ENCODE measurements at regions of chr6 and their contacts with region 1.

Region 1: DNA sequence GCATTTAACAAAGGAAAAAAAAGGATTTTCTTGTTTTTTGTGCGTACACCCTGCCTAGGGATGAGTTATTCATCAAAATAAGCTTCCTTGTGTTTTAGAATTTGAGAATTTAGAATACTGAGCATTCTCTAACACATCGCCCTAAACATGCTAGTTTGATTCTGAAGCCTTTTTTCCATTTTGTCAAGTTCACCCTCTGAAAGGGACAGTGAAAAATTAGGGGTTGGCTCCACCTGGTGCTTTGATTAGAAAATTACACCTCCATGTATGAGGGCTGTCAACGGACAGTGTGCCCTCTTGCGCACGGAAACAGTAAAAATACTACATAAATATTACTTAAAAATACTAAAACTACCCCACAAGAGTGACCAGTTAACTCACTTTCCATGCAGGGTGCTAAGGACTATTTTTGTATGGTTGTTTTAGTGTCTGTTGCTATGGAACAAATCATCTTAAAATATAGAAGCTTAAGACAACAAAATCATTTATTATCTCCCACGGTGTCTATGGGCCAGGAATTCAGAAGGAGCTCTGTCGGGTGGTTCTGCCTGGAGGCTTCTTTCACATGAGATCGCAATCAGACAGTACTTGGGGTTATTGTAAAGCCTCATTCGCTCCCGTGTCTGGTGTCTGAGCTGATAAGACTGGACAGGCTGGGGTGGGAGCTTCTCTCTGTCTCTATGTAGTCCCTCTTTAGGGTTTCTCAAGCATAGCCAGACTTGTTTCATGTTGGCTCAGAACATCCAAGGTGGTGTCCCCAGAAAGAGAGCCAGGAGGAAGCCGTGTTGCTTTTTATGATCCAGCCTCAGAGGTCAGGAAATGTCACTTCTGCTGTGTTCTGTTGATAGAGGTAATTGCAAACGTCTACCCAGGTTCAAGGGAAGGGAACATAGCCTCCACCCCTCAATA is 41.1 kb upstream of the TMEM170B start:
- DNase-seq: peak; percentile 69

Region 2: GRCh38 chr6:11241793-11242201 is 254.6 kb before region 1 on chr6:
- CTCF ChIA-PET with region 1: interaction called, 11 read pairs
- POLR2A ChIA-PET with region 1: no interaction called
- DNase-seq: peak; percentile 19

Region 3: DNA sequence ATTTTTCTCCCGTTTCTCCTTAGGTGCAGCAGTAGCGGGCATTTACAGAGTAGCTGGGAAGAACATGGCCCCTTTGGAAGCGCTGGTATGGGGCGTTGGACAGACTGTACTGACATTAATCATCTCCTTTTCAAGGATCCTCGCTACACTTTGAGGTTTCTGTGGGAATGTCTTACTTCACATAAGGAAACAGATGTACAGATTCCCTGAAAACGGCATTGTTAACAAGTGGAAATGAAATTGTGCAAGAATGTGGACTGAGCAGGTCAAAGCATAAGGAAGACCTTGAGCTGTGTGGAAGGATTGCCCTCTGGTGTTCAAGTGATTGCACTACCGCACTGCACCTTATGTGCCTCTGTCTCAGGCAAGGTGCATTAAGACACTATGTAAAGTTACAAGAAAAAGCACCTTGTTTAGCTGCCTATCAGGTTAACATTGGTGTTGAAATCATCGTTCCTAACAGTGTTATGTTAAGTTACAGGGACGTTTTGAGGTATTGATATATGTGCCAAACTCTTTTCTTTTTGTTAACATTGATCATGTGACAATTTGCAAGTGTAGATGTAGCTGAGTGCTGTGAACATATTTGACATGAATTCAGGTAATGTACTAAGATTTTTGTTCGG is 79.1 kb after region 1 on chr6:
- CTCF ChIA-PET with region 1: interaction called, 13 read pairs
- POLR2A ChIA-PET with region 1: no interaction called
- DNase-seq: peak; percentile 65

Measured in HEK293T (cell line).